ENCODE measurements at regions of chr12 and their contacts with region 1.

Region 1: DNA sequence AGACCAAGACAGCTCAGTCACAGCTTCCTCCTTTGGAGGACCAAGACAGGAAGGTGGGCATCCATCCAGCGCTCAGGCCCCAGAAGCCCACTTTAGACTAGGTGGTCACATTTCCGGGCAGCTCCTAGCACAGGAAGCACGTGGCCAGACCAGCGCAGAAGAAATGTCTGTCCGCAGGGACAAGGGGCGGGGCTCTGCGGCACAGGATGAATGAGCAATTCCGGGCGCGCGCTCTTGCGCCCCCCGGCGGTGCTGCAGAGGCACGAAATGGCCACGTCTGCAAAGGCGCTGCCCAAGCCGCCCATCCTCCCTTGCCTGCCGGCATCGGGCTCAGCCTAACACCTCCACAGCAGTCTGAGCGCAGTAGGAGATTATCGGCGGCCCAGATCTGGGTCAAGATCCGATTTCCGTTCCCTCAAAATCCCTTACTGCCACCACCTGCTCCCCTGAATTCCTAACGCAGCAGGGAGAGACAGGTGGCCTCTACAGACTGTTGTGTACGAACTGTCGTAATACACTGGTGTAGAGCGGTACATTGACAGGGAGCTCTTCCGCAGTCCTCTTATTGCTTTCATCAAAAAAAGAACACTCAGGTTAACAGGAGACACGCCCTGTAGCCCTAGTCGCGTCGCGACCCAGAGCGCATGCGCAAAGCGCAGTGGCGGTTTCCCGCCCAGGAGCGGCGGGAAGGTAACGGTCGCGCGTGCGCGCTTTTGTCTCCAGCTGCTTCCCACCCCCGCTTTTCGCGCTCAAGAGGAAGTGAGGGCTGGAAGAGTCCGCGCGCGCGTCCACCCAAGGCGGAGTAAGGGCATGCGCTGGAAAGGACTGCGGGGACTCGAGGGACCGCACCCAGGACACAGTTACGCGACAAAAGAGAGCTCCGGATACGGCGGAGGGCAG is 794 bp downstream of the TUBA1B start:
- DNase-seq: peak; percentile 97

Region 2: GRCh38 chr12:48514728-48515127 is 615.7 kb before region 1 on chr12:
- intact Hi-C with region 1: no loop called
- DNase-seq: no peak

Region 3: DNA sequence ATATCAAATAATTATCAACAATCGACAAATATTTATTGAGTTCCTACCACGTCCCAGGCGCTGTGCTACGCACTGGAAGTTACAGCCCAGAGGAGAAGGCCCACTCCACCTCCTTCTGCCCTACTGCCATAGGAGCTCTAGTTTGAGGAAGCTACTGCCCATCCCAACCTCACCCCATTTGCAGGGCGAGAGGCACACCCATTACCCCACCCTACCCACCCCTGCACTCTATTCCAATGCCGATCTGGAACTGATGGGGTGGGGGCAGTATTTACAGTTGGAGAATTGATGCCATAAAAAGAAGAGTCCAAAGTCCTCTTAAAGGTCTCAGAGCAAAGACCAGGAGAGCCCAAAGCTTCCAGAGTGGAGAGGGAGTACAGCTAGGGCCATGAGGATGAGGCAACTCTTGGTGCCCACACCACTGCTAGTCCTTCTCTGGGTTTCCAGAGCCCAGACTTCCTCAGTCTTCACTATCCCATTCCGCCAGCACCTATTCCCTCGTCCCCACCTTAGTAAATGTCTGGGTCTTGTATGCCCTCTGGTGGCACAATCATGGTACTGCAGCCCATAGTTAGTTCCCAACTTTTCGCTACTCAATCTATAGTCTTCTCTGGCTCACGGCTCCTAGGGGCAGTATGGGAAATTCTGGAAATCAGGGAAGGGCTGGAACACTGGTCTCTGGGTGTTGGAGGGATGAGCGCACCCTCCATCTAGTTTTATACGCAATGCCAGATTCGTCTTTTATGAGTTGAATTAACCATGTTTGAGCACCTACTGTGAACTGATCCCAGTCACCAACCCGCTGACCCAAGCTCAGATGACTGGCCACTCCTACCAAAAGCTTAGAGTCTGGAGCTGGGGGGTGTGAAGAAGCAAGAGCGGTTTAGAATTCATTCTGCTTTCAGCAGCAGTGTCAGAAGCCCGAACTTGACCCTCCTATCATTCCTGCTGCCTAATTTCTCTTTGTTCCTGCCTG is 334.6 kb before region 1 on chr12:
- intact Hi-C with region 1: no loop called
- DNase-seq: no peak

Region 4: GRCh38 chr12:49060237-49061156 is 69.9 kb before region 1 on chr12 and contains the start of gene KMT2D:
- intact Hi-C with region 1: loop called (anchors 2 kb)
- DNase-seq: peak; percentile 96
- total RNA-seq, gene KMT2D: 63.8 TPM

Region 5: DNA sequence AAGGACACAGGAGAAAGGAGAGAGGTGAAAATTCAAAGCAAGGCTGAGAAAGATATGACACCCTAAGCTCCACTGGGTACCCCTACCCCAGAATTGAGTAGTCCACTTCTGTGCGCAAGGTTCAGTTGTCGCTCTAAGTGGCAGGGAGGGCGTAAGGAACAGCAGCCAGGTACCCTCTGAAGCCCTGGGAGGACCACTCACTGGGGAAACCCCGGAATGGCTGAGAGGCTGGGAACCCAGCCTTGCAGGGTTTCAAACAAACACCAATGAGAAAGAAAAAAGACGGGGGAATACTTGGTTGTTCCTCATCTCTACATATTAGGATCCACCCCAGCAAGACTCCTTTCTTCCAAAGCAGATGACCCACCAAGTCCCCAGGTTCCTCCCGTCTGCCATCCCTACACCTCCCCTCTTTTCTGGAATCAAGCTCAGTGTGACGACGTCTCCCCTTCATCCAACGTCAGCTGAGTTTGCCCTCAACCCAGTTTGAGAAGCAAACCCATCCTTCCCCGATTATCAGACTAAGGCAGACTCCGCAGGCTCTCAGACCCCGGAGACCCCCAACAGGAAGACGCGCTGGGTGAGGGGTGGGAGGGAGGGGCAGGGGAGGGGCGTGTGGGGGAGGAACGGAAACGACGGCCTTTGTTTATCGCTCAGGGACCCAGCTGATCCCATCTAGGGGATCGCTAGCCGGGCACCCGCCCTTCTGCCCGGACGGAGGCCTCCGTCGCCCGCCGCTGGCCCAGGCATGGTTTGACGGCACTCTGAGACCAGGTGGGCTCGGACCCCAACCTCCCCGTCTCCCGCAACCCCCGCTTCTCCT is 20.5 kb before region 1 on chr12:
- intact Hi-C with region 1: loop called (anchors 2 kb)
- DNase-seq: peak; percentile 78

Region 6: DNA sequence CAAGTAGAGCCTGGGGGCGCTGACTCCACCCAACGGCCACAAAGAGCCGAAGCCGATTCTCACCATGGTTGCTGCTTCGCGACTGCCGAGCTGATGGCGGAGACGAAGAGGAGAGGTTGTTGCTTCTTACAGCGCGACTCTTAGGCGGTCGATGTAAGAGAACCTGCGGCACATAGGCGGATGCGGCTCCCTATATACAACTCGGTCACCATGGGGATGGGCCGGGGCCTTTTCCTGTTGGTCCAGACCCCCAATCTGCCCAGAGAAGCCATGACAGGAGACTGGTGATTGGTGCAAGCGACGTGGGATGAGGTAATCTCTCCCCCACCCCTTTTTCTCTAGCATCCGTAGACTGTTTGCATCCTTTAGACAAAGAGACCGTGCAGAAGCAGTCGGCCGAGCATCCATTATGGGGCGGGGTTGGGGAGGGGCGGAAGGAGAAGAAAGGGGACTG is 58.5 kb after region 1 on chr12 and contains the start of gene TUBA1A:
- intact Hi-C with region 1: loop called (anchors 1 kb)
- DNase-seq: peak; percentile 97
- total RNA-seq, gene TUBA1A: 250 TPM

Region 7: GRCh38 chr12:49200919-49201594 is 70.7 kb after region 1 on chr12:
- intact Hi-C with region 1: loop called (anchors 2 kb)
- DNase-seq: no peak

Region 8: GRCh38 chr12:49232940-49233841 is 102.8 kb after region 1 on chr12:
- intact Hi-C with region 1: loop called (anchors 1 kb)
- DNase-seq: peak; percentile 83

Region 9: DNA sequence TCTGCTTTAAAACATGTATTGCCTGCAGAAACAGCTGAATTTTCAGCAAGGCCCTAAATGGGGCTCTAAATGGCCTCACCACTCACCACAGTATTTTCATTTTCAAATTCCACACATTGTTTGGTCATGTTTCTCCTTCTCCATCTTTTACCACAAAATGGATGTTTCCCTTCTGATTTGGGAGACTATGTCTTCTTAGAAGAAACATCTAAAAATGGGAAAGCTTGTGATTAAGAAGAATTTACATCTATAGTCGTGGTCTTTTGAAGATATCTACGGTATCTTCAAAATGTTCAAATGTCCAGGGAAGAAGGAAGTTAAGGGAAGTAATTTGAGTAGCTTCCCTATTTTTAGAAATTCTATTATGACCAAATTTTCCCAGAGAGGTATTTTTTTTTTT is 113.8 kb after region 1 on chr12:
- intact Hi-C with region 1: no loop called
- DNase-seq: no peak

Region 10: GRCh38 chr12:49720214-49720613 is 589.8 kb after region 1 on chr12:
- intact Hi-C with region 1: no loop called
- DNase-seq: no peak